ENCODE measurements at regions of chr4 and their contacts with region 1.

Region 1: GRCh38 chr4:37721995-37722638 is 35.9 kb upstream of the RELL1 start:
- DNase-seq: peak; percentile 58
- H3K4me3 Mint-ChIP-seq: no peak overlapping the region
- H3K27ac Mint-ChIP-seq: no peak overlapping the region
- H3K4me1 Mint-ChIP-seq: peaks cover 19% of the 10 kb centered on the region
- H3K27me3 Mint-ChIP-seq: peaks cover 2% of the 10 kb centered on the region

Region 2: GRCh38 chr4:37767546-37767945 is 45.4 kb after region 1 on chr4:
- intact Hi-C with region 1: loop called (anchors 5 kb)
- DNase-seq: no peak
- H3K4me3 Mint-ChIP-seq: no peak overlapping the region
- H3K27ac Mint-ChIP-seq: no peak overlapping the region
- H3K4me1 Mint-ChIP-seq: peaks cover 11% of the 10 kb centered on the region
- H3K27me3 Mint-ChIP-seq: no peaks in the 10 kb centered on the region